Activated CD8-positive, alpha-beta memory T cell treated with anti-CD3 and anti-CD28 coated beads, Interleukin-2, amount 10 ng/mL, durations not matched to agents 7 days and 5 days (primary cell): ENCODE measurements at regions of chr13 and their contacts with region 1.

Region 1: GRCh38 chr13:30617315-30618185 is at the start of gene USPL1:
- DNase-seq: peak; percentile 99
- ATAC-seq: peak; percentile 88
- H3K4me3 Mint-ChIP-seq: no peak within 1 kb of the TSS
- H3K27ac Mint-ChIP-seq: no peak within 1 kb of the TSS
- H3K4me1 Mint-ChIP-seq: peaks cover 27% of the 10 kb centered on the region
- H3K27me3 Mint-ChIP-seq: no peaks in the 10 kb centered on the region
- total RNA-seq, gene USPL1: 19.9 to 23.4 TPM

Region 2: DNA sequence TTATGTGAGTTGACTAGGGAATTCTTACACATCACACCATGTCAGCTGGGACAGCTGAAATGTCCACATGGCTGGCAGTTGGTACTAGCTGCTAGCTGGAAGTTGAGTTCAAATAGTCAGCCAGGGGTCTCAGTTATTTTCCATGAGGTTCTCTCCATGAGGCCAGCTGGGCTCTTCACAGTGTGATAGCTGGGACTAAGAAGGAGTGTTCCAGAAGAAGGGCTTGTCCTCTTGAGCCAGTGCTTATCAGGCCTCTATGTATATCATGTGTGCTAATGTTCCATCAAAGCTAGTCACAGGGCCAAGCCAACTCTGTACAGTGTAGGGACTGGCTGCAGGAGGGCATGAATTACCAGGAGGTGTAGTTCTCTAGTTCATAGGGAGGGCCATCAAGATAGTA is 12.0 kb after region 1 on chr13:
- CTCF ChIA-PET with region 1: interaction called, 13 read pairs
- DNase-seq: no peak
- ATAC-seq: no peak
- H3K4me3 Mint-ChIP-seq: no peak overlapping the region
- H3K27ac Mint-ChIP-seq: peak overlapping the region; percentile 49
- H3K4me1 Mint-ChIP-seq: peaks cover 46% of the 10 kb centered on the region
- H3K27me3 Mint-ChIP-seq: no peaks in the 10 kb centered on the region

Region 3: GRCh38 chr13:30847650-30848307 is 230.2 kb after region 1 on chr13:
- CTCF ChIA-PET with region 1: no interaction called
- DNase-seq: no peak
- ATAC-seq: no peak
- H3K4me3 Mint-ChIP-seq: no peak overlapping the region
- H3K27ac Mint-ChIP-seq: no peak overlapping the region
- H3K4me1 Mint-ChIP-seq: peaks cover 14% of the 10 kb centered on the region
- H3K27me3 Mint-ChIP-seq: peaks cover 21% of the 10 kb centered on the region